ENCODE measurements at regions of chr11 and their contacts with region 1.

Region 1: GRCh38 chr11:61004180-61004611 is 32.7 kb downstream of the CD6 start:
- DNase-seq: no peak
- H3K4me3 Mint-ChIP-seq: peak overlapping the region; percentile 71
- H3K27ac Mint-ChIP-seq: peak overlapping the region; percentile 73
- H3K4me1 Mint-ChIP-seq: peaks cover 62% of the 10 kb centered on the region
- H3K27me3 Mint-ChIP-seq: no peaks in the 10 kb centered on the region

Region 2: GRCh38 chr11:60992842-60993409 is 11.3 kb before region 1 on chr11:
- intact Hi-C with region 1: loop called (anchors 1 kb)
- DNase-seq: no peak
- H3K4me3 Mint-ChIP-seq: peak overlapping the region; percentile 68
- H3K27ac Mint-ChIP-seq: peak overlapping the region; percentile 92
- H3K4me1 Mint-ChIP-seq: peaks cover 65% of the 10 kb centered on the region
- H3K27me3 Mint-ChIP-seq: no peaks in the 10 kb centered on the region

Region 3: DNA sequence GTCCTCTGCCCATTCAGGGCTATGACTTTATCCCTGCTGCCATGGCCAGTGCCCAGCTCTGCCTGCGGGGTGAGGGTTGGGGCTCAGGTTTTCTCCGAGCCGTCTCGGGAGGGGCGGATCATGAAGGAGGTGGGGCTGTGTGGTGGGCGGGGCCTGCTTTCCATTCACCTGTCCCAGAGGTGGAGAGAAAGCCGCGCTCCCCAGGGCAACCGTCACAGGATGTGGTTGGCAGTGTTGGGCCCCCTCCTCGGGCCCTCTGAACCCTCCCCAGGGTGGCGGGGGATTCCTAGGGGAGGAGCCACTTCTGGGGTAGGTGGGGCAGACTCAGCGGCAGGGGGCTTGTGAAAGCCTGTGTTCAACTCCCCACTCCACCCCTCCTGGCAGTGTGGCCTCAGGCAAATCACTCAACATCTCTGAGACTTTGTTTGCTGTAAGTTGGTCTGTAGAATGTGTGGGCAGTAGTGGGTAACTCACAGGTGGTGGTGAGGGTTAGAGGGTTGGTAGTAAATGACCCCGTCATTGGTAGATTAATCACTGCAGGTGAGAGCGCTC is 17.5 kb after region 1 on chr11:
- intact Hi-C with region 1: loop called (anchors 2 kb)
- DNase-seq: peak; percentile 77
- H3K4me3 Mint-ChIP-seq: peak overlapping the region; percentile 66
- H3K27ac Mint-ChIP-seq: peak overlapping the region; percentile 92
- H3K4me1 Mint-ChIP-seq: peaks cover 68% of the 10 kb centered on the region
- H3K27me3 Mint-ChIP-seq: no peaks in the 10 kb centered on the region

Measured in activated T-helper 2 cell treated with anti-CD3 and anti-CD28 coated beads, Interferon-gamma antibody, Interleukin-2, Interleukin-4, amounts not matched to agents 10 μg/mL and 5 μg/mL and 100 μg/mL, durations not matched to agents 14 hours and 24 hours and 36 hours (primary cell).